ENCODE measurements at regions of chr5 and their contacts with region 1.

Region 1: DNA sequence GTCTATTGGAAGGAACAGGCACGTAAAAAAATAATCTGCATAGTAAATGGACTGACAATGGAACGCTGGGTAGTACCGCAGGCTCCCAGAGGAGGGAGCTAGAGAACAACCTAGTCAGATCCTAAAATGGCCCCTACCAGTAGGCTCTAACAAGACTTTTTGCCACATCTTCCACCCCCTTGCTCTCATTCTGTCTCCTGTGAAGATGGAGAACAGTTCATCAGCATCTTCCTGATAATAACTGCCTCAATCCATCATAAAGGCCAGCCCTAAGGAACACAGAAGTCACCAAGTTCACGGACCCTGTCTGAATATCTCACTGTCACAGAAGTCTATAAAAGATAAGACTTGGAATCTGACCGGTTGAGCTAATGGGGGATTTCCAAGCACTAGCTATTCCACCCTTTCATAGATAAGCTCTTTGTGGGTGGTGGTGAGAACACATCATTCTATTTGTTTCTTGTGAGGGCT is 133.4 kb downstream of the SLC1A3 start:
- DNase-seq: peak; percentile 89 to 94 (median 92)
- H3K4me3 ChIP-seq: peak overlapping the region in 1 of 7 experiments; percentile 49
- H3K27ac ChIP-seq: no peak overlapping the region
- H3K4me1 ChIP-seq: peaks cover 0 to 20% (median 5%) of the 10 kb centered on the region in 4 experiments
- H3K27me3 ChIP-seq: no peaks in the 10 kb centered on the region

Region 2: GRCh38 chr5:36638056-36638455 is 101.7 kb before region 1 on chr5:
- CTCF ChIA-PET with region 1: no interaction called
- POLR2A ChIA-PET with region 1: no interaction called
- DNase-seq: no peak
- H3K4me3 ChIP-seq: no peak overlapping the region
- H3K27ac ChIP-seq: no peak overlapping the region
- H3K4me1 ChIP-seq: no peaks in the 10 kb centered on the region
- H3K27me3 ChIP-seq: no peaks in the 10 kb centered on the region

Region 3: DNA sequence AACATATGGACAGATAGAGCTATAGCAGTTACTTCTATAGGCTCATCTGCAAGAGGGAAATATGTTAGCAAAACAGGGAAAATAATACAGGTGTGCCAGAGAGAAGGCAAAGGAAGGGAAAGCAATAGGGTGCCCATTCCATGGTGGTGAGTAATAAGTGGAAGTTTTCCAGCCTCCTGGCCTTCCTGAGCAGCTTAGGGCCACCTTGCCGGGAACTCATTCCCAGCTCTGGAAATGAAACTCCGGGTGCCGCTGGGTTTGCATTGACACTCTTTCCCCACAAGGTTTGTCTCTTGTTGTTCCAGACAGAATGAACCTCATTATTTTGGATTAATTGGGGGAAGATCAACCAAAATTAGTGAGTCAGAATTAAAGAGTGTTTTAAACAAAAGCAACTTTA is 75.0 kb before region 1 on chr5:
- CTCF ChIA-PET with region 1: no interaction called
- POLR2A ChIA-PET with region 1: no interaction called
- DNase-seq: no peak
- H3K4me3 ChIP-seq: no peak overlapping the region
- H3K27ac ChIP-seq: no peak overlapping the region
- H3K4me1 ChIP-seq: peaks cover 0 to 8% (median 6%) of the 10 kb centered on the region in 4 experiments
- H3K27me3 ChIP-seq: no peaks in the 10 kb centered on the region

Region 4: DNA sequence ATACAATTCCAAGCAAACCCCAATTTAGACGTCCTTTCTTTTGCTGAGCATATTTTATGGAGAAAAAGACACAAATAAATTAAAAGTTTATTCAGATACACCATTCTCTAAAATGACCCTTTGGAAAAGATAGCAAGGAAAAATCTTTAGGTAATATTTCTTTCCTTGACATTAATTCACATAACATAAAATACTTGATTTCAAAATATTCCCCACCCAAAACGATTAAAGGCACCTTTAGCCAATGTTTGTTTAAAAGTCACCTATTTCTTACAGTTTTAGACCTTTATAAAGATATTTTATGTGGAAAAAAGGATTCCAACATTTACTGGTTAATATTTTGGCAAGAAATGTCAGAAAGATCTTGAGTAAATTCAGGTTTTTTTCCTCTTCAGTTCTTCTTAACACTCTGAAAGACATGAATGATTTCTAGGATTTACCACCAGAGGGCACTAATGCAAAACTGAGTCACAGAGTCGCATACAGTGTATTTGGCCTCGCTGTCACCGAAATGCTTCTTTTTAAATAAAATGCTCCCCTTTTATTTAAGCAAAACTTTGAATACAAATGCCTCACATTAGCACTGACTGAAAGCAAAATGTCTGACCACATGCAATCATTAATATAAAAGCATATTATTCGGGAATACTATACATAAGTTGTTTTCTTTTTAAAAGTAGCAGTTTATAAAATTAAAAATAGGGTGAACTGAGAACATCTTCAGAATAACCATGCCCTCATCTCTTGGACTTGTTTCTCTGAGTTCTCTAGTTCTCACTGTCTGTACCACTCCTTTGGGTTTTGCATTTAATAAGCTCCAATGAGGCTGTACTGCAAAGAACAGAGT is 10.9 kb before region 1 on chr5:
- CTCF ChIA-PET with region 1: interaction called, 28 read pairs
- POLR2A ChIA-PET with region 1: interaction called, 3 read pairs
- DNase-seq: peak; percentile 71 to 88 (median 83)
- H3K4me3 ChIP-seq: peak overlapping the region in 1 of 7 experiments; percentile 10
- H3K27ac ChIP-seq: no peak overlapping the region
- H3K4me1 ChIP-seq: peaks cover 5 to 20% (median 11%) of the 10 kb centered on the region in 4 experiments
- H3K27me3 ChIP-seq: no peaks in the 10 kb centered on the region

Region 5: DNA sequence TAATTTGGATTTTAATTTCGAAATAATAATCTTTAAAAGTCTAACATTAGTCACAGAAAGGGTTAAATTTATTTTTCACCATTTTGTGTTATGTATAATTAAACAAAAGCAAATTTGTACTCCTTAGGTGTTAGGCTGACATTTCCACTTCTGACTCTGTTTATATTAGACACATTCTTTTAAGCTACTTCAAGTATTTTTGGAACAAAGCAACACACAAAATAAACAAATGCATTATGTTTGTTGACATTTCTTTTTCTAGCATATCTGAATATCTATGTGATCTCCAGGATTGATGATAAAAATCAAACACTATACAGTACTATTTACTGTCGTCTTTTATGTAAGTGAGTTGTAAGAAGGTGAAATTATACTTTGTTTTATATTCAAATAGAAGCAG is 92.5 kb after region 1 on chr5:
- CTCF ChIA-PET with region 1: no interaction called
- POLR2A ChIA-PET with region 1: no interaction called
- DNase-seq: no peak
- H3K4me3 ChIP-seq: no peak overlapping the region
- H3K27ac ChIP-seq: no peak overlapping the region
- H3K4me1 ChIP-seq: peaks cover 0 to 10% (median 4%) of the 10 kb centered on the region in 4 experiments
- H3K27me3 ChIP-seq: no peaks in the 10 kb centered on the region

Region 6: DNA sequence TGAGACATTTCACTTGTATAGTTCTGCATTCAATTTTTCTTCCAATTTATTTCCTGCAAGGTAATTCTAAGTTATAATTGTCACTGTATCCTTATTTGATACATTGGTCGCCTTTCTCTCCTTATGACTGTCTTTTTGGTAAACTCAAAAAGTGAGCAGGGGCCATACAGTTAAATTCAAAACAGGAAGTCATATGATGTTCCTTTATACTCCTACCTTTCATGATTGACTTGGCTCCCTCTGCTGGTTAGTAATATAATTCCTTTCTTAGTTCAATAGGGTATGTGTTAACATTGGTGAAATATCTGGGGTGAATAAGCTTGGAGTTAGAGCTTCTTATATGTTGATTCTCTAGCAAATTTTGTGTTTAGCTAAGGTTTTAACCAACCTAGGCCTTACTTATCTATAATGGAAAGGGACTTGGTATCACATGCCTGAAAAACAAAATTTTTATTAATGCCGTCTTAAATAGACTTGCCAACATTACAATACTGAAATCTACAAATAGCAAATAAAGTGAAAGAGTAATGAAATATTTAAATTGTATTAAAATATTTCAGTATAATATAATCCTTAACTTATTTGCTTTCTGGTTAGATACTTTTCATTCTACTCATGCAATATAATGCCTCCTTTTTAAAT is 130.7 kb after region 1 on chr5:
- CTCF ChIA-PET with region 1: interaction called, 56 read pairs
- POLR2A ChIA-PET with region 1: interaction called, 3 read pairs
- DNase-seq: peak; percentile 84 to 90 (median 88)
- H3K4me3 ChIP-seq: no peak overlapping the region
- H3K27ac ChIP-seq: no peak overlapping the region
- H3K4me1 ChIP-seq: peaks cover 11 to 37% (median 23%) of the 10 kb centered on the region in 4 experiments
- H3K27me3 ChIP-seq: no peaks in the 10 kb centered on the region

Region 7: DNA sequence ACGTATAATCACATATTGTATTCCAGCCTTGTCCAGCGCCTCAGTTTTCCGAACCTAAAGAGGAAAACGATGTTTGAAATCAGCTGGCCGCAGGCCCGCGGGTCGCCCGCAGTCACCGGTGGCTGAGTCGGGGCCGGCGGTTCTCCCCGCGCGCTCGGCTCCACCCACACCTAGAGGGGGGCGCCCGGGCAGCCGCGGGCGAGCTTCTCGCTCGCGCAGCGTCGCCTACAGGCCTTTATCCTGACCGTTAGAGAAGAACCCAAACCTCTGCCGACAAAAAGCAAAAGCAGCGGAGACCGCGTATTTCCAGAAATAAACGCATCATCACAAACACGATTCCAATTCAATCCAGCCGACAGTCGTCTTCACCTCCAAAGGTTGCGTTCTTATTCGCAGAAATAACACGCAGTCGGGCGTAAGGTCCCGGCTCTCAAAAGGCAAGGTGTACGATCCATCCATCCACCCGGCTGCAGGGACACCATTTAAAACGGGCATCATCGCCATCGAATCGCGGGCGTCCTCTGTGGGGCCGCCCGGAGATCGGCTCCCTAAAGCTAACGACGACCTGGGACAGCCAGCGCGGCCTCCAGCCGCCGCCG is 136.1 kb after region 1 on chr5:
- CTCF ChIA-PET with region 1: interaction called, 56 read pairs
- POLR2A ChIA-PET with region 1: interaction called, 3 read pairs
- DNase-seq: peak; percentile 87 to 91 (median 89)
- H3K4me3 ChIP-seq: peak overlapping the region; percentile 80 to 100 (median 95)
- H3K27ac ChIP-seq: peak overlapping the region; percentile 96 to 98
- H3K4me1 ChIP-seq: peaks cover 11 to 53% (median 28%) of the 10 kb centered on the region in 4 experiments
- H3K27me3 ChIP-seq: no peaks in the 10 kb centered on the region

Region 8: DNA sequence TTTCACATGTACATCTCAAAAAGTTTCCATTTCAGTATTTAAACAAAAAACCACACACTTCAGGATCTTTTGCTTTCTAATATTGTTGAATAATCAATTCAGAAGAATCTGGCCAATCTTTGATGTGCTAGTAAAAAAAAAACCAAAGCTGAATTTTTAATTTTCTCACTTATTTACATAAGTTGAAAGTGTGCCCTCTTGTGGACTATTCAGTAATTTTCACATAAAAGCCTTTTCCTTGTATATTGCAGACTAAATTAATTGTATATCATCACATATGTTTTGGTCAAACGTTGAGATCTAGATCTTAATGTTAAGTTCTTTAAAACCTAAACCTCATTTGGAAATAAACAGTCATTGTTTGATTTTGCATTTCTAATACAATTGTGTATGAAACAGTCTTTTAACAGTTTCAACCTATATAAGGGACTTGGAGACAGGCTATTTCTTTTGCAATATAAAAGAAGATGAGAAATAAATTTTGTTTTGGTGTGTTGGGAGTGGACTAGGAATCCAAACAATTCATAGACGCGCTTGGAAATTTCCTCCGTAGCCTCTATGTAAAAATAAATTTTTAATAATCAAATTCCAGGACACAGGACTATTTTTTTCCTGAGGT is 204.9 kb after region 1 on chr5:
- CTCF ChIA-PET with region 1: interaction called, 11 read pairs
- POLR2A ChIA-PET with region 1: no interaction called
- DNase-seq: peak; percentile 82 to 91 (median 90)
- H3K4me3 ChIP-seq: no peak overlapping the region
- H3K27ac ChIP-seq: no peak overlapping the region
- H3K4me1 ChIP-seq: peaks cover 0 to 3% (median 0%) of the 10 kb centered on the region in 4 experiments
- H3K27me3 ChIP-seq: no peaks in the 10 kb centered on the region

Region 9: GRCh38 chr5:37005946-37006540 is 266.3 kb after region 1 on chr5:
- CTCF ChIA-PET with region 1: interaction called, 44 read pairs
- POLR2A ChIA-PET with region 1: interaction called, 4 read pairs
- DNase-seq: peak; percentile 22 to 59 (median 50)
- H3K4me3 ChIP-seq: no peak overlapping the region
- H3K27ac ChIP-seq: no peak overlapping the region
- H3K4me1 ChIP-seq: no peaks in the 10 kb centered on the region
- H3K27me3 ChIP-seq: no peaks in the 10 kb centered on the region

Measured in common myeloid progenitor, CD34-positive (primary cell).